ENCODE measurements at regions of chr17 and their contacts with region 1.

Region 1: GRCh38 chr17:44070455-44071197 is at the start of gene G6PC3:
- DNase-seq: peak; percentile 97
- H3K4me3 ChIP-seq: peak within 1 kb of the TSS; percentile 67 to 81 (median 72)
- H3K27ac ChIP-seq: peak within 1 kb of the TSS; percentile 87 to 93 (median 92)
- H3K4me1 ChIP-seq: peaks cover 31 to 64% (median 51%) of the 10 kb centered on the region in 4 donors
- H3K27me3 ChIP-seq: no peaks in the 10 kb centered on the region
- CTCF ChIP-seq: peak in 2 of 3 experiments; percentile 23 to 38
- EP300 ChIP-seq: no peak
- POLR2A ChIP-seq: peak; percentile 66
- total RNA-seq, gene G6PC3: 23.9 to 37.5 (median 30.7) TPM

Region 2: GRCh38 chr17:44024271-44024663 is 46.4 kb before region 1 on chr17:
- intact Hi-C with region 1: no loop called
- DNase-seq: no peak
- H3K4me3 ChIP-seq: no peak overlapping the region
- H3K27ac ChIP-seq: no peak overlapping the region
- H3K4me1 ChIP-seq: no peaks in the 10 kb centered on the region
- H3K27me3 ChIP-seq: no peaks in the 10 kb centered on the region
- CTCF ChIP-seq: no peak
- EP300 ChIP-seq: no peak
- POLR2A ChIP-seq: no peak

Region 3: GRCh38 chr17:44110823-44111633 is 40.4 kb after region 1 on chr17:
- intact Hi-C with region 1: loop called (anchors 5 kb)
- DNase-seq: peak; percentile 98
- H3K4me3 ChIP-seq: peak overlapping the region; percentile 41 to 66 (median 49)
- H3K27ac ChIP-seq: peak overlapping the region; percentile 87 to 98 (median 92)
- H3K4me1 ChIP-seq: peaks cover 99 to 100% (median 99%) of the 10 kb centered on the region in 4 donors
- H3K27me3 ChIP-seq: no peaks in the 10 kb centered on the region
- CTCF ChIP-seq: no peak
- EP300 ChIP-seq: no peak
- POLR2A ChIP-seq: peak; percentile 67

Measured in esophagus muscularis mucosa (tissue), 4 donors.